ENCODE measurements at regions of chr4 and their contacts with region 1.

Region 1: DNA sequence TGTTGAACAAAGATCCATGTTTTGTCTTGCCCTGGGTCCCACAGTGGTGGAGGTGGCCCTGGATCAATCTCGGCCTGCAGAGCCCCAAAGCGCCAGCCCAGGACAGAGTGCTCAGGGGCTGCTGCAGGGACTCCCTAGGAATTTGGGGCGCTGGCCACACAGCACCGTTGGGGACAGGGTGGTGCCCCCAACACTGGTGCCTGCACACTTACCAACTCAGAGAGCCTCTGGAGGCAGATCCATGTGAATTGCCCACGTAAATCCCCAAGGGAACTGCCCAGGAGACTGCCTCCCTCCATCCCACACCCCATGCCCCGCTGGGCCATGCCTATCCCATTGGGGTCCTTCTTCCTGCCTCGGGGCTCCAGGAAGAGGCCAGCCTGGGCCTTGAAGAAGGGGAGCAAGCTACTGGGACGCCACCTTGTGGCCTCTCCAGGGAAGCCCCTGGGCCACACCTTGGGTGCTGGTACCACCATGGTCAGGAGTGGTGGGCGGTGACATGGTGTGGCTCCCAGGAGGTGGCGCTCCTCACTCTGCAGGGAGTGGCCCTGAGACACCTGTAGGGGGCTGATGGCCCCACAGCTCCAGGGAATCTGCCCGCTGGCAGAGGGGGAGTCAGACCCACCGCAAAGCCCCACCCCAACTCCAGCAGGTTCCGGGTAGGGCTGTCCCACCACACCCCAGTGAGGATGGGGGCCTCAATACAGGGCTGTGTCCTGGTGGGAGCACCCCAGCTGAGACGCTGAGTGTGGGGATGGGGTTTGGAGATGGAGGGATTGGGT is 22.8 kb downstream of the CFAP99 start:
- DNase-seq: peak in 1 of 5 donors; percentile 63
- H3K4me3 ChIP-seq: no peak overlapping the region
- H3K27ac ChIP-seq: no peak overlapping the region
- H3K4me1 ChIP-seq: no peaks in the 10 kb centered on the region
- H3K27me3 ChIP-seq: no peaks in the 10 kb centered on the region
- CTCF ChIP-seq: peak in 2 of 3 donors; percentile 24 to 30
- EP300 ChIP-seq: no peak
- POLR2A ChIP-seq: no peak

Region 2: GRCh38 chr4:2220016-2220630 is 221.5 kb before region 1 on chr4:
- intact Hi-C with region 1: loop called in 2 of 4 experiments (anchors 5 to 10 kb)
- DNase-seq: peak; percentile 63 to 79 (median 76)
- H3K4me3 ChIP-seq: no peak overlapping the region
- H3K27ac ChIP-seq: no peak overlapping the region
- H3K4me1 ChIP-seq: no peaks in the 10 kb centered on the region
- H3K27me3 ChIP-seq: no peaks in the 10 kb centered on the region
- CTCF ChIP-seq: peak; percentile 61 to 87 (median 72)
- EP300 ChIP-seq: no peak
- POLR2A ChIP-seq: no peak

Measured in ovary (tissue), 10 donors.